ENCODE measurements at regions of chr12 and their contacts with region 1.

Region 1: DNA sequence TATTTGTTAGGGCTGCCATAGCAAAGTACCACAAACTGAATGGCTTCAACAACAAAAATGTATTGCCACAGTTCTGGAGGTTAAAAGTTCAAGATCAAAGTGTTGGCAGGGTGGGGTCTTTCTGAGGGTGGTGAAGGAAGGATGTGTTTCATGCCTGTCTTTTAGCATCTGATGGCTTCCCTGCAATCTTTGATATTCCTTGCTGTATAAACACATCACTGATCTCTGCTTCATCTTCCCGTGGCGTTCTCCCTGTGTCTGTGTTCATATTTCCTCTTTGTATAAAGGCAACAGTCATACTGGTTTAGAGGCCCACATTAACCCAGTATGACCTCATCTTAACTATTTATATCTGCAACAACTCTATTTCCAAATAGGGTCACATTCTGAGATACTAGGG is 167.5 kb downstream of the BTG1 start:
- DNase-seq: peak; percentile 18
- ATAC-seq: peak; percentile 65
- H3K4me3 Mint-ChIP-seq: no peak overlapping the region
- H3K27ac Mint-ChIP-seq: peak overlapping the region; percentile 18
- H3K4me1 Mint-ChIP-seq: peaks cover 28% of the 10 kb centered on the region
- H3K27me3 Mint-ChIP-seq: no peaks in the 10 kb centered on the region
- CTCF ChIP-seq: no peak

Region 2: DNA sequence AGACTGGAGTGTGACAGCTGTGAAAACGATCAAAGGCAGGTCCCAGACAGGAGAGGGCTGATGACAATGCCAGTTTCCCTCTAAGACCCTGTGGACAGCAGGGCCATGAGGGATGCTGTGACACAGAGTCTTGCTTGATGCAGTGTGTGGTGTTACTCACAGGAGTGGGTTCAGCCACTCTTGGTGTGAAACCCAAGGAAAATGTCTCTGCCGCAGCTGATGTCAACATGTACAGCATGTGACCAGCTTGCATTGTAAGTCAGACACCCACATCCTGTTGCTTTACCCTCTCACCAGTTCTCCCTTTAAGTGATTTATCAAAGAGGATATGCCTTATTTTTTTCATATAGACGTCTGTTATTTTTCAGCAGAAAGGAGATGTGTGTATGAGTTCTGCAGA is 101.1 kb before region 1 on chr12:
- CTCF ChIA-PET with region 1: no interaction called
- POLR2A ChIA-PET with region 1: interaction called, 3 read pairs
- intact Hi-C with region 1: loop called (anchors 1 kb)
- DNase-seq: peak; percentile 93
- ATAC-seq: peak; percentile 94
- H3K4me3 Mint-ChIP-seq: peak overlapping the region; percentile 63
- H3K27ac Mint-ChIP-seq: peak overlapping the region; percentile 99
- H3K4me1 Mint-ChIP-seq: peaks cover 63% of the 10 kb centered on the region
- H3K27me3 Mint-ChIP-seq: no peaks in the 10 kb centered on the region
- CTCF ChIP-seq: no peak

Region 3: GRCh38 chr12:91910871-91911388 is 67.2 kb before region 1 on chr12:
- CTCF ChIA-PET with region 1: no interaction called
- POLR2A ChIA-PET with region 1: no interaction called
- intact Hi-C with region 1: no loop called
- DNase-seq: no peak
- ATAC-seq: no peak
- H3K4me3 Mint-ChIP-seq: no peak overlapping the region
- H3K27ac Mint-ChIP-seq: no peak overlapping the region
- H3K4me1 Mint-ChIP-seq: peaks cover 2% of the 10 kb centered on the region
- H3K27me3 Mint-ChIP-seq: no peaks in the 10 kb centered on the region
- CTCF ChIP-seq: no peak

Measured in activated CD8-positive, alpha-beta T cell treated with anti-CD3 and anti-CD28 coated beads for 36 hours (primary cell).